PC-3 (cell line): ENCODE measurements at regions of chr19 and their contacts with region 1.

Region 1: GRCh38 chr19:16628183-16628983 is at the start of gene MED26:
- DNase-seq: peak; percentile 98
- ATAC-seq: peak; percentile 94
- H3K4me3 ChIP-seq: peak within 1 kb of the TSS; percentile 100
- H3K27ac ChIP-seq: peak within 1 kb of the TSS; percentile 85
- H3K4me1 ChIP-seq: peaks cover 19% of the 10 kb centered on the region
- H3K27me3 ChIP-seq: no peaks in the 10 kb centered on the region
- CTCF ChIP-seq: no peak
- total RNA-seq, gene MED26: 17.5 and 17.7 TPM in 2 replicates

Region 2: GRCh38 chr19:16473875-16474392 is 154.4 kb before region 1 on chr19:
- CTCF ChIA-PET with region 1: no interaction called
- POLR2A ChIA-PET with region 1: no interaction called
- intact Hi-C with region 1: no loop called
- DNase-seq: no peak
- ATAC-seq: no peak
- H3K4me3 ChIP-seq: no peak overlapping the region
- H3K27ac ChIP-seq: no peak overlapping the region
- H3K4me1 ChIP-seq: peaks cover 20% of the 10 kb centered on the region
- H3K27me3 ChIP-seq: no peaks in the 10 kb centered on the region
- CTCF ChIP-seq: no peak

Region 3: GRCh38 chr19:16572332-16573211 is 55.8 kb before region 1 on chr19 and contains the start of gene SLC35E1:
- CTCF ChIA-PET with region 1: no interaction called
- POLR2A ChIA-PET with region 1: interaction called, 3 read pairs
- intact Hi-C with region 1: loop called (anchors 5 kb)
- DNase-seq: peak; percentile 98
- ATAC-seq: peak; percentile 95
- H3K4me3 ChIP-seq: peak within 1 kb of the TSS; percentile 91
- H3K27ac ChIP-seq: peak within 1 kb of the TSS; percentile 77
- H3K4me1 ChIP-seq: peaks cover 43% of the 10 kb centered on the region
- H3K27me3 ChIP-seq: no peaks in the 10 kb centered on the region
- CTCF ChIP-seq: no peak
- total RNA-seq, gene SLC35E1: 52.6 and 62.3 TPM in 2 replicates

Region 4: DNA sequence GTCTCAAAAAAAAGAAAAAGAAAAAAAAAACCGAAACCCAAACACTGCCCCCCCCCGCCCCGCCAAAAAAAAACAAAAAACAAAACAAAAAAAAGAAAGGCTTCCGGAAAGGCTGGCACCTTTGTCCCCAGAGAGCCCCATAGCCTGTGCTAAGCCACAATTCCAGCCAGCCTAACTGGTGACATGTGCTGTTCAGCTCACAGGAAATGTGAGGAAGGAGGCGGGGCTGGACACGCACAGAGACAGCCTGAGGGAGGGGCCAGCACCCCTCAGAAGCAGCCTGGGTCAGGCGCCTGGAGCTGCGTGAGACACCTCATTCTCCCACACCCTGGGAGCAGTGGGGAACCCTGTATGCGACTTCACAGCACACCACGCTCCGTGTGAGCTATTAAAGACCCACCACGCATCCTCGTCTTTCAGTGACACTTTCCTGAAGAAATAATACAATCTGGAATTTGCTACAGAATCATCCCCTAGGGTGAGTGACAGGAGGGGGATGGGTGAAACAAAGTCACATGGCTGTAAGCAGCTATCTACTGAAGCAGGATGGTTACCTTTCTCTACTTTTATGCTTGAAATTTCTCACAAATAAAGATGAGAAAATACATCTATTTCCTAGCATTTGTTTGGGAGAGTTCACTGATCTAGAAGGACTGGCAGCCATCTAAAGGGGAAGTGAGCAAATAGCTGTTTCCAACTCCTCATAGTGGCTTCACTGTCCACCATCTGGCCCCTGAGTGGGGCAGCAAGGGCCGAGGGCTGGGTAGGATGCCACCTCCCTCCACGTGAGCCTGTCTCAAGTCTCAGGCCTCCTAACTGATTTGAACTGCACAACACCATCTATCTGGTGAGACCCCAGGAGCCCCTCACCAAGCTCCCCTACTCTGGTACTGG is 43.9 kb before region 1 on chr19:
- CTCF ChIA-PET with region 1: no interaction called
- POLR2A ChIA-PET with region 1: interaction called, 16 read pairs
- intact Hi-C with region 1: no loop called
- DNase-seq: peak; percentile 71
- ATAC-seq: peak; percentile 94
- H3K4me3 ChIP-seq: no peak overlapping the region
- H3K27ac ChIP-seq: peak overlapping the region; percentile 4; the same call in 1 of the 2 replicates
- H3K4me1 ChIP-seq: peaks cover 15% of the 10 kb centered on the region
- H3K27me3 ChIP-seq: no peaks in the 10 kb centered on the region
- CTCF ChIP-seq: no peak

Region 5: DNA sequence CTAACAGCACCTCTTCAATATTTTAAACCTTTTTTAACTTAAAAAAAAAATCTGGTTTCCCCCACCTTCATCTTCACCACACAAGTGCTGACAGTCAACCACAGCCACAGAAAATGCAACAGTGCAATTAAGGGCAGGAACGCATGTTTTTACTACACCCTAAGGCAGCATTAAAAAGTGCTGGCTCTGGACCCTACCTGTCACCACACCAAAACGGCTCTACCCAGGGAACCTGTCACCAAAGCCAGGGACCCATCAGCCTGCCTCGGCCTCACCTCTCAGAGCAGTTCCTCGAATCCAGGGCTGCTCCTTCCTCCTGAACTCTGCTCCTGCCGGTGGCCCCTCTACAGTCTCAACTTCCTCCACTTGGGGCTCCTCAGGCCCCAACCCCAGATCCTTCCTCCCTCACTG is 33.7 kb before region 1 on chr19:
- CTCF ChIA-PET with region 1: no interaction called
- POLR2A ChIA-PET with region 1: no interaction called
- intact Hi-C with region 1: no loop called
- DNase-seq: no peak
- ATAC-seq: no peak
- H3K4me3 ChIP-seq: no peak overlapping the region
- H3K27ac ChIP-seq: no peak overlapping the region
- H3K4me1 ChIP-seq: peaks cover 5% of the 10 kb centered on the region
- H3K27me3 ChIP-seq: no peaks in the 10 kb centered on the region
- CTCF ChIP-seq: no peak

Region 6: DNA sequence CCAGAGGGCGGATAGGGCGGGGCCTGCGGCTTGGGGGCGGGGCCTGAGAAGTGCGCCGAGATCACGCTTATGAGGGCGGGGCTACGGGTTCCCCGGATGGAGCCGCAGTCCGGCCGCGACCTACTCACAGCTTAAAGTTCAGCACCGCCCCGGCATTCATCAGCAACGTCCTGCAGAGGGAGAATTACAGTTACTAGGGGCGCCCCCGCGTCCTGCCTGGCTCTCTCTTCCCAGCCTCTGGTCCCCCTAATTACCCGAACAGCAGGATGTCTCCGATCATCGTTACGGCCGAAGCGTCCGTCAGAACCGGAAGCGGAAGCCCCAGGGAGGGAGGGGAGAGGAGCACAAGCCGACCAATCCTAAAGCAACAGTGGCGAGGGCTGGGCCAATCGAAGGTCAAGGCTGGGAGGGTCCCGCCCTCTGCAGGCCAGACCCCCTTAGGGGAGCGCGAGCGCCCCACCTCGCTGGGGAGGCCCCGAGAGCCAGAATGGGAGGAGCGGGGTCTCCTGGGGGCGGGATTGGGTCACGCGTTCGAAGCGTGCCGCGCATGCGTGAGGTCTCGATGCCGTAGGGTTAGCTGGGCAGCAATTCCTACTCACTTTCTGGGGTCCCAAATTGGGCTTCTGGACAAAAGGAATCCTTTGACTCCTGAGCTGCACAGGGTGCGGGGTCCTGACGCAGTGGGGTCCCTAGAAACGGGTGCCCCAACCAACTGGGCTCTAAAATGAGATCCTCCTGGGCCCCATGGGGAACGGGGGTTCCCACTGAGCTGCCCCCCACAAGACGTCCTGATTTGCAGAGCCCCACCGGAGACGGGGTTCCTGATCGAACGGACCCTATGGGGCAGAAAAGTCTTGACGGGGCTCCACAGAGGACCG is 31.7 kb after region 1 on chr19 and contains the start of gene SMIM7:
- CTCF ChIA-PET with region 1: interaction called, 3 read pairs
- POLR2A ChIA-PET with region 1: no interaction called
- intact Hi-C with region 1: loop called (anchors 2 kb)
- DNase-seq: peak; percentile 98
- ATAC-seq: peak; percentile 97
- H3K4me3 ChIP-seq: peak within 1 kb of the TSS; percentile 88
- H3K27ac ChIP-seq: peak within 1 kb of the TSS; percentile 77
- H3K4me1 ChIP-seq: peaks cover 8% of the 10 kb centered on the region
- H3K27me3 ChIP-seq: no peaks in the 10 kb centered on the region
- CTCF ChIP-seq: no peak; the same call in 1 of the 2 replicates
- total RNA-seq, gene SMIM7: 62.0 and 74.1 TPM in 2 replicates

Region 7: DNA sequence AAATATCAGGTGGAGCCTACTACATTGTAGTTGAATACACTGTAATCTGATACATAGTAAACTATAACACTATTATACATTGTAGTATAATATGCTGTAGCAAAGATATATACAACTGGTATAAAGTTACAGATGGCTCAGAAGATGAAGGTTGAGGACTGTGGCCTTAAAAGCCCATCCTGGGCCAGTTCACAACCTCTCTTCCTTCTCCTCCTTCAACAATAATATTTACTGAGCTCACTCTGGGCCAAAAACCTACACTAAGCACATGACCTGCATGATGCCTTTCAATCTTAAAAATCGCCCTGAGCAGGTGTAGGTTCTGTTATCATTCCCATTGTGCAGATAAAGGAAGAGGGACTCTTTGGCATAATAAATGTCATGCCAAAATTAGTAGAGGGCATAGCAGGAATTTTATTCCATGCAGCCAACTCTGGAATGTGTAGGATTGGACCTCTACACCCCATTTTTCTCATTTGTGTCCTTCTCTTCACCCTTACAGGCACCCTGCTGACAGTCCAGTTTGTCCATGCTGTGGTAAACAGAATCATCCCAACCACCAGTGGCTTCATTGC is 186.2 kb after region 1 on chr19:
- CTCF ChIA-PET with region 1: no interaction called
- POLR2A ChIA-PET with region 1: interaction called, 22 read pairs
- intact Hi-C with region 1: no loop called
- DNase-seq: no peak
- ATAC-seq: no peak
- H3K4me3 ChIP-seq: no peak overlapping the region
- H3K27ac ChIP-seq: no peak overlapping the region
- H3K4me1 ChIP-seq: no peaks in the 10 kb centered on the region
- H3K27me3 ChIP-seq: no peaks in the 10 kb centered on the region
- CTCF ChIP-seq: no peak